ENCODE measurements at regions of chr15 and their contacts with region 1.

Region 1: GRCh38 chr15:38707802-38708671 is 143.4 kb upstream of the RASGRP1 start:
- DNase-seq: peak; percentile 80
- ATAC-seq: peak; percentile 93
- H3K4me3 ChIP-seq: no peak overlapping the region
- H3K27ac ChIP-seq: peak overlapping the region; percentile 74; the same call in 1 of the 2 replicates
- H3K4me1 ChIP-seq: peaks cover 7% of the 10 kb centered on the region
- H3K27me3 ChIP-seq: no peaks in the 10 kb centered on the region
- CTCF ChIP-seq: peak; percentile 82
- POLR2A ChIP-seq: no peak; the same call in 1 of the 2 replicates
- RAD21 ChIP-seq: peak; percentile 95

Region 2: DNA sequence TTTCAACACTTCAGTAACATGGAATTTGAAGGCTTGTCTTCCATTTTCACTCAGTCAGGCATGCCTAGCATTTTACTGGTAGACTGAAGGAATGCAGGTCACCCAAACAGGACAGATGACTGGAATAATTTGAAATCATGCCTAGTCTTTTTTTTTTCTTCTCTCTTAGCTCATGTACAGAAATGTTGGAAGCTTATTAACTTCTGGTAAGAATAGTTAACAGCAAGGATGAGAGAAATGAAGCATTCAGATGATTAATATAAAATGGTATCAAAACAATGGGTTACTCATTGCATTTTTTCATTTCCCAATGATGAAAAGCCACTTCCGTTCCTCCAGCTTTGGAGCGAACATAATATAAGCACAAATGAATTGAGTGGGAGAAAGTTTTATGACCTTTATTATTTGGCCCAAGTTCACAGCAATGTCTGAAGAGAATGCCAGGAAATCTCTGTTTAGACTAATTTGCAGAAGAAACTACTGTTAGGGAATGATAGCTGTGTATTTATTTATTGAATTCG is 288.1 kb after region 1 on chr15:
- CTCF ChIA-PET with region 1: no interaction called
- POLR2A ChIA-PET with region 1: no interaction called
- dilution Hi-C with region 1: no loop called
- in situ Hi-C with region 1: no loop called
- intact Hi-C with region 1: loop called (anchors 2 kb)
- DNase-seq: peak; percentile 90
- ATAC-seq: peak; percentile 74
- H3K4me3 ChIP-seq: no peak overlapping the region
- H3K27ac ChIP-seq: peak overlapping the region; percentile 99; the same call in 1 of the 2 replicates
- H3K4me1 ChIP-seq: peaks cover 28% of the 10 kb centered on the region
- H3K27me3 ChIP-seq: no peaks in the 10 kb centered on the region
- CTCF ChIP-seq: no peak
- POLR2A ChIP-seq: no peak
- RAD21 ChIP-seq: no peak

Region 3: GRCh38 chr15:39301589-39301999 is 593.6 kb after region 1 on chr15:
- CTCF ChIA-PET with region 1: no interaction called
- POLR2A ChIA-PET with region 1: no interaction called
- dilution Hi-C with region 1: no loop called
- in situ Hi-C with region 1: loop called (anchors 25 kb)
- intact Hi-C with region 1: loop called (anchors 5 kb)
- DNase-seq: peak; percentile 77
- ATAC-seq: peak; percentile 7; the same call in 1 of the 2 replicates
- H3K4me3 ChIP-seq: no peak overlapping the region
- H3K27ac ChIP-seq: peak overlapping the region; percentile 96
- H3K4me1 ChIP-seq: peaks cover 24% of the 10 kb centered on the region
- H3K27me3 ChIP-seq: no peaks in the 10 kb centered on the region
- CTCF ChIP-seq: no peak
- POLR2A ChIP-seq: no peak
- RAD21 ChIP-seq: no peak

Region 4: DNA sequence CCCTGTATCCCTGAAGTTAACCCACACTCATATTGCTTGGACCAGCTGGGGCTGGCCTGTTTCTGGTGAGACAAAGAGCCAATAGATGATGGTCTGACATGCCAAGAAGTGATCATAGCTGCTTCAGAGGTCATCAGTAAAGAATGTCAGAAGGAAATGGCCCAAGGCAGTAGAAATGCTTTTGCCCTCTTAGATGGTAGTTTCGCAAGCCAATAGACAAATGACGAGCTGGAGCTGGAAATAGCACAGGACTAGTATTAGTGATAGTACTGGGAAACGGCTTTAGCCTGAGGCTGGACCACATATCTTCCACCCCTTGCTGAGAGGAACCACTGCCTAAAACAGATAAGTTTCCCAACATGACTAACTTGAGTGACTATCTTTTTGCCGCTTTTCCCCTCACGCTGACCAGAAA is 696.7 kb after region 1 on chr15:
- CTCF ChIA-PET with region 1: no interaction called
- POLR2A ChIA-PET with region 1: no interaction called
- dilution Hi-C with region 1: no loop called
- in situ Hi-C with region 1: no loop called
- intact Hi-C with region 1: loop called (anchors 1 kb)
- DNase-seq: peak; percentile 95
- ATAC-seq: peak; percentile 83
- H3K4me3 ChIP-seq: no peak overlapping the region
- H3K27ac ChIP-seq: peak overlapping the region; percentile 88
- H3K4me1 ChIP-seq: peaks cover 11% of the 10 kb centered on the region
- H3K27me3 ChIP-seq: no peaks in the 10 kb centered on the region
- CTCF ChIP-seq: no peak
- POLR2A ChIP-seq: no peak
- RAD21 ChIP-seq: 0 out of 2 replicates have a peak, but pooled peaks have one; percentile 11

Region 5: DNA sequence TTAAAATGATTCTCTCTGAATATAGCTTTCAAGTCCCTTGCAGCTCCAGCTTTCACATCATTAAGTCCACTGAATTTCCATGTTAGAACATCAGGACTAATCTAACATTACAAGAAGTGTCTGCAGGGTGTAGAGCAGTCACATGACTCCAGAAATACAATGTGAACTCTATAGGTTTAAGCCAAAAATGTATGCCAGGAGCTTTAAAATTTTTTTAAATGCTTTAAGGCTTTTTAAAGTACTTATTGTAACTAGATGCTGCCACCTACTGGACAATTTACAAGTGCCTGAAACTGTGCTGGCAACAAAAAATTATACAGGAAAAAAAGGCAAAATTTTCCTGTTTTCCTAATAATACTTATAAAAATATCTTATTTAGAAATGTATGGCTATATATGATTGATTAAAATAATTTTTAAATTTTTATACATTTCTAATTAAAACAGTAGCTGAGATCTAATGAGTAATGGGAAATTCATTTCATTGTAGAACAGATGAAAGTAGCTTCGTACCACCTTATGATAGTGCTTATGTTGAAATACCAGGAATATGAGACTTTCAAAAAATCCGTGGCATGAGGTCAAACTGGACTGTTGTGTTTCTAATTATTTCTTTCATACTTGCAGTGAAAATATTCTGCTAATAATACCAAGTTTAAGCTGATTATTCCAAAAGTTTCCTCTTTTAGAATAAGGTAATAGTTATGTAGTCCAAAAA is 1048.9 kb after region 1 on chr15:
- CTCF ChIA-PET with region 1: interaction called, 4 read pairs
- POLR2A ChIA-PET with region 1: no interaction called
- dilution Hi-C with region 1: no loop called
- in situ Hi-C with region 1: loop called (anchors 10 kb)
- intact Hi-C with region 1: loop called (anchors 1 kb)
- DNase-seq: peak; percentile 83
- ATAC-seq: peak; percentile 35; the same call in 1 of the 2 replicates
- H3K4me3 ChIP-seq: no peak overlapping the region
- H3K27ac ChIP-seq: no peak overlapping the region
- H3K4me1 ChIP-seq: no peaks in the 10 kb centered on the region
- H3K27me3 ChIP-seq: no peaks in the 10 kb centered on the region
- CTCF ChIP-seq: peak; percentile 80
- POLR2A ChIP-seq: no peak
- RAD21 ChIP-seq: peak; percentile 76

Measured in IMR-90 (cell line).